Mammary epithelial cell (primary cell): ENCODE measurements at regions of chr5 and their contacts with region 1.

Region 1: DNA sequence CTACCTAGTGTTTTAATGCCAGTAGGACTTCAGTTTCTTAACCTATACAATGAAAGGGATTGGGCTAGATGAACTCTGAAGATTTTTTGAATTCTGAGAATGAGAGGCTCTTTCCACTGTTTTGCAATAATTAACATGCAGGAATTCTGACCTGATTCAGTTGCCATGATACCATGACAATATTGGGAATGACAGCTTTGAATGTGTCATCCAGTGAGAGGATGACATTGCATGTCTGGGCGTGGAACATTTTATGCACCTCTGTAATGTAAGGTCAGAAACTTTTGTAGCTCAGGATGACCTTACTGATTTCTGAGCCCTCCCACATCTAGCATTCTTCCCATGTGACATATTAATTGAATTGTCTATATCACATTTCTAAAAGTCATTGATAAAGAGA is 30.6 kb upstream of the SPINK5 start:
- DNase-seq: peak; percentile 78
- H3K4me3 ChIP-seq: no peak overlapping the region
- H3K27ac ChIP-seq: peak overlapping the region; percentile 30
- H3K4me1 ChIP-seq: no peaks in the 10 kb centered on the region
- H3K27me3 ChIP-seq: no peaks in the 10 kb centered on the region
- CTCF ChIP-seq: no peak

Region 2: DNA sequence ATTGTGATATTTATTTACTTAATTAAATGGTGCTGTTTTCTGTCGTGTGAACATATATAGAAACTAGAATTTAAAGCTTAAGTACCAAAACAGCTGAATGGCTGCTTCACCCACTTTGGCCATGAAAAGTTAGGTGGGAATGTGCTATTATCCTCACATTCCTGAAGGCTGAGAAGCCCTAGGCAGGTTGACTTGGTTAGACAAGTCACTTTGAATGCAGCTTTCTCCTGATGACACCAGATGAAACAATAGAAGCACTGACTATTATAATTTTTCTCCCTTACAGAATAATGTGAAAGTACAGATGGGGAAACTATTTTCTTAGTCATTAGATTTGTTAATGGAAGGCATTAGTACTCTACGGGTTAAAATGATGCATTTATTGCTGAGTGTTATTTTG is 61.7 kb before region 1 on chr5:
- CTCF ChIA-PET with region 1: no interaction called
- dilution Hi-C with region 1: no loop called
- in situ Hi-C with region 1: no loop called
- intact Hi-C with region 1: loop called (anchors 2 kb)
- DNase-seq: peak; percentile 54
- H3K4me3 ChIP-seq: no peak overlapping the region
- H3K27ac ChIP-seq: no peak overlapping the region
- H3K4me1 ChIP-seq: peaks cover 15% of the 10 kb centered on the region
- H3K27me3 ChIP-seq: no peaks in the 10 kb centered on the region
- CTCF ChIP-seq: no peak

Region 3: GRCh38 chr5:148011401-148012132 is 21.6 kb before region 1 on chr5:
- CTCF ChIA-PET with region 1: no interaction called
- dilution Hi-C with region 1: no loop called
- in situ Hi-C with region 1: no loop called
- intact Hi-C with region 1: loop called (anchors 1 kb)
- DNase-seq: peak; percentile 92
- H3K4me3 ChIP-seq: no peak overlapping the region
- H3K27ac ChIP-seq: peak overlapping the region; percentile 18
- H3K4me1 ChIP-seq: peaks cover 34% of the 10 kb centered on the region
- H3K27me3 ChIP-seq: no peaks in the 10 kb centered on the region
- CTCF ChIP-seq: no peak

Region 4: GRCh38 chr5:148090773-148091221 is 57.7 kb after region 1 on chr5:
- CTCF ChIA-PET with region 1: no interaction called
- dilution Hi-C with region 1: no loop called
- in situ Hi-C with region 1: no loop called
- intact Hi-C with region 1: no loop called
- DNase-seq: peak; percentile 7
- H3K4me3 ChIP-seq: no peak overlapping the region
- H3K27ac ChIP-seq: no peak overlapping the region
- H3K4me1 ChIP-seq: peaks cover 17% of the 10 kb centered on the region
- H3K27me3 ChIP-seq: no peaks in the 10 kb centered on the region
- CTCF ChIP-seq: no peak